Activated CD8-positive, alpha-beta T cell treated with anti-CD3 and anti-CD28 coated beads for 36 hours (primary cell): ENCODE measurements at regions of chr4 and their contacts with region 1.

Region 1: GRCh38 chr4:39458505-39459300 is at the starts of genes LIAS and RPL9:
- DNase-seq: peak; percentile 96
- ATAC-seq: peak; percentile 86
- H3K4me3 Mint-ChIP-seq: peak within 1 kb of the TSS; percentile 98
- H3K27ac Mint-ChIP-seq: peak within 1 kb of the TSS; percentile 100
- H3K4me1 Mint-ChIP-seq: peaks cover 45% of the 10 kb centered on the region
- H3K27me3 Mint-ChIP-seq: no peaks in the 10 kb centered on the region
- CTCF ChIP-seq: no peak
- total RNA-seq, gene LIAS: 35.8 to 42.5 TPM
- total RNA-seq, gene RPL9: 2,605 to 2,684 TPM

Region 2: GRCh38 chr4:39353478-39354253 is 105.0 kb before region 1 on chr4:
- CTCF ChIA-PET with region 1: no interaction called
- POLR2A ChIA-PET with region 1: interaction called, 12 read pairs
- intact Hi-C with region 1: no loop called
- DNase-seq: peak; percentile 44
- ATAC-seq: peak; percentile 79
- H3K4me3 Mint-ChIP-seq: peak overlapping the region; percentile 73
- H3K27ac Mint-ChIP-seq: peak overlapping the region; percentile 99
- H3K4me1 Mint-ChIP-seq: peaks cover 79% of the 10 kb centered on the region
- H3K27me3 Mint-ChIP-seq: no peaks in the 10 kb centered on the region
- CTCF ChIP-seq: no peak

Region 3: DNA sequence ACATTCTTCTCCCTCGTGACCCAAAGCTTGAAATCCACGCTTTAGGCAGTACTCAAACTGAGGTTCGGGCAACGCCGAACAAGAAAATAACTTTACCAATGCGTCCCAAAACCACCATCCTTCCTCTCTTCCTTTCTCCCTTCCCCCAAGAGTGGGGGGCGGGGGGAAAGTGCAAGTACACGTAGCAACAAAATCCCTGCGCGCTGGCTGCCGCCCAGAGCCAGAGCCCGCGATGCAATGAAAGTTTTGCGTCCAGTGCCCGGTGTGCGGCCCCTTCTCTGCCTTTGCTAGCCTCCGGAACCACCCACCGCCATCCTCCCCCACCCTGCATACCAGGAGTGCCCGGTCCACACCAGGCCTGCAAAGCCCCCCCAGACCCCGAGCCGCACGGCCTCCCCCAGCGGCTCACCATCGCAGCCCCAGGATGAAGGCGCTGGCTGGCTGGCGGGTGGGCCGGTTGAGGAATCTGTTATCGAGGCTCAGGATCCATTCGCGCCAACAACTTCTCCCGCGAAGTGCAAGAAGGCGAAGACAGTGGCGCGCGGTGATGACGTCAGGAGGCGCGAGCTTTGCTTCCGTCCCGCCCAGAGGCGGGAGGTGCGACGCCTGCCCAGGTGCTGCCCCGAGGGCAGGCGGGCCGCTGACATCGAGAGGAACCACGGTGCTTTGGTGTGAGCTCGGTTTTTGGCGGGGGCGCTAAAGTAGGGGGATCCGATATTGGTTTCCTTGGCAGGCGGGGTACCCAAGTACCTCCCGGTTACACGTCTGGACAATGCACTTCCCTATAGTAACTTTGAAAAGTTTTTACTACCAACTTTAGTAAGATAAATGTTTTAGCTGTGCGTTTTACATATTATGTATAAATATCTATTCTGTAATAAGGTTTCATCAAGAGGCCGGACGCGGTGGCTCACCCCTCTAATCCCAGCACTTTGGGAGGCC is 92.6 kb before region 1 on chr4 and contains the start of gene RFC1:
- CTCF ChIA-PET with region 1: no interaction called
- POLR2A ChIA-PET with region 1: interaction called, 31 read pairs
- intact Hi-C with region 1: no loop called
- DNase-seq: peak; percentile 97
- ATAC-seq: peak; percentile 87
- H3K4me3 Mint-ChIP-seq: peak within 1 kb of the TSS; percentile 91
- H3K27ac Mint-ChIP-seq: peak within 1 kb of the TSS; percentile 95
- H3K4me1 Mint-ChIP-seq: peaks cover 26% of the 10 kb centered on the region
- H3K27me3 Mint-ChIP-seq: no peaks in the 10 kb centered on the region
- CTCF ChIP-seq: no peak
- total RNA-seq, gene RFC1: 108 to 114 TPM

Region 4: DNA sequence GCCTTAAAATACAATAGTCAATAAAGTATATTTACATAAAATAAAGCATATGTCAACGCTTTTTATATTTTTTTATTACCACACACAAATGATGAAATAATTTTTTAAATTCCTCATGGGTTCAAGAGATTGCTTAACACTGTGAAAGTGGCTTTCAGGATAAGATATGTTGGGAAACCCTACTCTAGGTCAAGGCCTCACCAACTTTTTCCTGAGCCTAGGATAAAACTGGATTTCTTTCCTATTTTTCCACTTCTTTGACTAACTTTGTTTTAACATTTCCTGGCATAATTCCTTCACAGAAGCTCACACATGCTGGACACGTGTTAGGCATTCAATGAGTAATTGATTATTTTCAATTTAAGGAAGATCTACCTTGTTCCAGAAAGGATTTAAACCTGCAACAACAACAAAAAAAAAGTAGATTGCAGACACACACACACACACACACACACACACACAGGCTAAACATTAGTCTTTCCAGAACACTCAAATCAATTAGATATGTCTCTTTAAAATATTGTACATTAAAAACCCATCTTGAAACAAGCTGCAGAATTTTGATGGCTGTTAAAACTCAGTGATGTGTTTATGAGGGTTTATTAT is 42.9 kb before region 1 on chr4:
- CTCF ChIA-PET with region 1: no interaction called
- POLR2A ChIA-PET with region 1: no interaction called
- intact Hi-C with region 1: no loop called
- DNase-seq: no peak
- ATAC-seq: no peak
- H3K4me3 Mint-ChIP-seq: no peak overlapping the region
- H3K27ac Mint-ChIP-seq: no peak overlapping the region
- H3K4me1 Mint-ChIP-seq: peaks cover 3% of the 10 kb centered on the region
- H3K27me3 Mint-ChIP-seq: no peaks in the 10 kb centered on the region
- CTCF ChIP-seq: no peak

Region 5: GRCh38 chr4:39446751-39447573 is 11.7 kb before region 1 on chr4:
- CTCF ChIA-PET with region 1: interaction called, 6 read pairs
- POLR2A ChIA-PET with region 1: interaction called, 46 read pairs
- intact Hi-C with region 1: no loop called
- DNase-seq: peak; percentile 75
- ATAC-seq: peak; percentile 88
- H3K4me3 Mint-ChIP-seq: peak overlapping the region; percentile 49
- H3K27ac Mint-ChIP-seq: peak overlapping the region; percentile 11
- H3K4me1 Mint-ChIP-seq: peaks cover 28% of the 10 kb centered on the region
- H3K27me3 Mint-ChIP-seq: no peaks in the 10 kb centered on the region
- CTCF ChIP-seq: no peak

Region 6: DNA sequence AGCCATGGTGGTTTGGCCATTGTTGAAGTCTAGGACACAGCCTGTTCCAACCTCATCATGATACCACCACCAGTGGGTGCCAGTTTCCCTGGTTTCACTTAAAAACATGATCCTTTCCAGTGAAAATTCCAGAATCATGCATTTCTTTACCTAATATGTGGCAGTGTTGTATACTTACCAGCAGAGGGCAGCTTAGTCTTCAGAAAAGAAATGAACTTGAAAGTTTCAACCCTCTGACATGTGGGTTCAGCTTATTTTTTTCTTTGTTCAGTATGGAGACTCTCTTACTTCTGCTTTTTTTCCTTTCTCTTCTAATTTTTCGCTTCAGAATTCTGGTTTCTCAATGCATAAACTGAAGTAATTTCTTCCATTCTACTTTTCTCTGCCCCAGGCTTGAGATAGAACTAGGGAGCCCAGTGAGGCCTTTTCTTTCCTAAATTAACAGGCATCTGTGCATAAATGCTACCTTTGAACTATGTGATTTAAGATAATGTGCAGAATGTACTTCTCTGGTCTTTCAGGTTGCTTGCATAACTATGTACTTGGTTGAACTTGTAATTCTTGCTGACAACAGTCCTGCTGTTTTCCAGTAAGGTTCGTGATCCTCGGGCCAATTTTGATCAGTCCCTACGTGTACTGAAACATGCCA is 10.8 kb after region 1 on chr4:
- CTCF ChIA-PET with region 1: interaction called, 31 read pairs
- POLR2A ChIA-PET with region 1: interaction called, 8 read pairs
- intact Hi-C with region 1: no loop called
- DNase-seq: peak; percentile 16
- ATAC-seq: peak; percentile 79
- H3K4me3 Mint-ChIP-seq: no peak overlapping the region
- H3K27ac Mint-ChIP-seq: peak overlapping the region; percentile 60
- H3K4me1 Mint-ChIP-seq: peaks cover 8% of the 10 kb centered on the region
- H3K27me3 Mint-ChIP-seq: no peaks in the 10 kb centered on the region
- CTCF ChIP-seq: peak; percentile 94

Region 7: GRCh38 chr4:39638354-39639240 is 179.9 kb after region 1 on chr4 and contains the start of gene SMIM14:
- CTCF ChIA-PET with region 1: no interaction called
- POLR2A ChIA-PET with region 1: interaction called, 14 read pairs
- intact Hi-C with region 1: no loop called
- DNase-seq: peak; percentile 88
- ATAC-seq: peak; percentile 77
- H3K4me3 Mint-ChIP-seq: peak within 1 kb of the TSS; percentile 89
- H3K27ac Mint-ChIP-seq: peak within 1 kb of the TSS; percentile 82
- H3K4me1 Mint-ChIP-seq: peaks cover 32% of the 10 kb centered on the region
- H3K27me3 Mint-ChIP-seq: no peaks in the 10 kb centered on the region
- CTCF ChIP-seq: no peak
- total RNA-seq, gene SMIM14: 0.87 to 2.0 TPM